Right cardiac atrium (tissue), 5 donors: ENCODE measurements at regions of chr12 and their contacts with region 1.

Region 1: DNA sequence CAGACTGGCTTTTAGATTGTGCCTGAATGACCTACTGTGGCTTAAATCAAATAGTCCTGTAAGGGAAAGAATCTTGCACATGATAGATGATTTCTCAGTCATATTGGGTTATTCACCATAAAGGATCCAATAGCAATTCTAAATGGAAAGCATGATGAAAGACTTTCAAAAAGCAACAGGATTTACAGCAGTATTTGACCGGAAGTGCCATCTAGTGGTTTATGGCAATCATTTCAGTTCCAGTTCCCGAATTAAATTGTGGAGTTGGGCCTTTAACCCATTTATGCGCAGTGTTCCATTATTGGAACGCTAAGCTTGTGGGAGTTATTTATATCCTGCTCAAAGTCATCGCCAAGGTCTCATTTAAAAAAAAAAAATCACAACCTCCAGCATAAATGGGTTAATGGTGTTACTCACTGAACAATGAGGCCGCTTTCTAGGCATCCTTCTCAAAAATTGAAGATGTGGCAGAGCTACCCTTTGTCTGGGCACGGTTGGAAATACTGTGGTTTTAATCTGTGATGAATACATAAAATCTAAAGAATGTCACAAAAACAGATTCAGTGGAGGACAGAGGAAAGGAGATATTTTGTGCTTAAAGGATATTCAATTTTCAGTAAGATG is 60.8 kb upstream of the REP15 start:
- DNase-seq: no peak
- ATAC-seq: peak; percentile 29 to 40
- H3K4me3 ChIP-seq: no peak overlapping the region
- H3K27ac ChIP-seq: no peak overlapping the region
- H3K4me1 ChIP-seq: no peaks in the 10 kb centered on the region
- H3K27me3 ChIP-seq: no peaks in the 10 kb centered on the region

Region 2: GRCh38 chr12:27424631-27425230 is 210.7 kb before region 1 on chr12:
- intact Hi-C with region 1: no loop called
- DNase-seq: no peak
- ATAC-seq: peak; percentile 79 to 89
- H3K4me3 ChIP-seq: no peak overlapping the region
- H3K27ac ChIP-seq: no peak overlapping the region
- H3K4me1 ChIP-seq: no peaks in the 10 kb centered on the region
- H3K27me3 ChIP-seq: no peaks in the 10 kb centered on the region

Region 3: GRCh38 chr12:27523642-27524493 is 111.6 kb before region 1 on chr12 and contains the start of gene PPFIBP1:
- intact Hi-C with region 1: loop called in 2 of 4 experiments (anchors 10 kb)
- DNase-seq: peak; percentile 98 to 100 (median 99)
- ATAC-seq: peak; percentile 99
- H3K4me3 ChIP-seq: peak within 1 kb of the TSS; percentile 84
- H3K27ac ChIP-seq: peak within 1 kb of the TSS; percentile 94
- H3K4me1 ChIP-seq: peaks cover 4% of the 10 kb centered on the region
- H3K27me3 ChIP-seq: no peaks in the 10 kb centered on the region
- total RNA-seq, gene PPFIBP1: 72.4 to 176 (median 94.8) TPM

Region 4: GRCh38 chr12:27549801-27550652 is 85.4 kb before region 1 on chr12:
- intact Hi-C with region 1: loop called in 1 of 4 experiments (anchors 10 kb)
- DNase-seq: peak; percentile 86 to 90 (median 90)
- ATAC-seq: peak; percentile 92 to 93
- H3K4me3 ChIP-seq: no peak overlapping the region
- H3K27ac ChIP-seq: peak overlapping the region; percentile 98
- H3K4me1 ChIP-seq: peaks cover 30% of the 10 kb centered on the region
- H3K27me3 ChIP-seq: no peaks in the 10 kb centered on the region

Region 5: DNA sequence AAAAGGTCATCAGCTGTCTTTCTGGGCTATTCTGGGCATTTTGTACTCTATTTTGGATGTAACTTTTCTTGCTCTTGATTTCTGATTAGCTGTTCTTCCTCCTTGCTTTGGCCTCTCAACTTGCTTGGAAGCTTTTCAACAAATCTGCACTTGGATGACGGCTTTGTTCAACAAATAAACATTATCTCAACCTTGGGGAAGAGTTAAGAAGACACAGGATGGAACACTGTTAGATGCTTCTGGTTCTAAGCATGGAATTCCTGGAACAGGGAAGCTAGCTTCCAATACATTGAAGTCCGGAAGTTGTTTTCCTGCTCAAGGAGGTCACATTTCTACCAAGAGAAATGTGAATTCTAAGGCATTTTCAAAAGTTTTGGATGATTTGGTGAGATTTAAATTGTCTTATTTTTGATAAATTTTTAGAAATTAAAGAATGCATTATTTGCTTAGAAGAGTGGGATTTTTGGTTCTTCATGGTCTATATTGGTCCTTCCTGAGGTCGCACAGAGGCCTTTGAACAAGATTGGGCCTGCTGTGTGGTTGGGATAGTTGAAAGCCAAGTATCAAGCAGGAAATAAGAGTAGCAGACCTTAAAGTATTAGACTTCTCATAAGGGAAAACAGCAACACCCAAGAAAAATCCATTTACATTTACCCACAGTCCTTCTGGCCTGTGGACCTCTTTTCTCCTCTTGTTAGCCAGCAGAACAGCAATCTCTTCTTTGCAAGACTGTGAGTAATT is 52.2 kb before region 1 on chr12:
- intact Hi-C with region 1: loop called in 1 of 4 experiments (anchors 10 kb)
- DNase-seq: no peak
- ATAC-seq: peak; percentile 80 to 83
- H3K4me3 ChIP-seq: no peak overlapping the region
- H3K27ac ChIP-seq: peak overlapping the region; percentile 91
- H3K4me1 ChIP-seq: peaks cover 17% of the 10 kb centered on the region
- H3K27me3 ChIP-seq: no peaks in the 10 kb centered on the region